ENCODE measurements at regions of chr20 and their contacts with region 1.

Region 1: DNA sequence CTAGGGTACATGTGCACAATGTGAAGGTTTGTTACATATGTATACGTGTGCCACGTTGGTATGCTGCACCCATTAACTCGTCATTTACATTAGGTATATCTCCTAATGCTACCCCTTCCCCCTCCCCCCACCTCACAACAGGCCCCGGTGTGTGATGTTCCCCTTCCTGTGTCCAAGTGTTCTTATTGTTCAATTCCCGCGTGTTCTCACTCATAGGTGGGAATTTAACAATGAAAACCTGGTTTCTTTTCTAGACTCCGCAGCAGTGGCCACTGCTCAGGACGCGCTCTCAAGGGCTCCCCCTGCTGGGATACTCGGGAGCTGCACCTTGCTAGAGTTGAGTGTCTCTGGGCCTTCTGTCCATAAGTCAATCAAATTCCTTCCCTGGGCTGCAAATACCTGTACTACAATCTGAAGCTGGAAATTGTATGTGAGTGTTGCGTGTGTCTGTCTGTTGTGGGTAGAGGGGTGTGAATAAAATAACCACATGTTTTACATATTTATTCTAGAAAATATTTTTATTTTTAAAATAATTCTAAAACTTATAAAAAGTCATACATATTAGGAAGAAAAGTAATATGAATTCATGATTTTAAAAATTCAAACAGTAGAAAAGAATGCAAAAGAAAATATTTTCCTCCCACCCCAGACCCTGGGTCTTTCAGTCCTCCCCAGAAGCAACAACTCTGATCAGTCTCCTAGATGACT is 8.2 kb upstream of the CEP250 start:
- DNase-seq: peak; percentile 90
- H3K4me3 ChIP-seq: peak overlapping the region; percentile 21 to 42 (median 22)
- H3K27ac ChIP-seq: no peak overlapping the region
- H3K4me1 ChIP-seq: peaks cover 3% of the 10 kb centered on the region
- H3K27me3 ChIP-seq: no peaks in the 10 kb centered on the region
- CTCF ChIP-seq: peak; percentile 87 to 94
- POLR2A ChIP-seq: no peak

Region 2: GRCh38 chr20:35344354-35344837 is 102.8 kb before region 1 on chr20:
- CTCF ChIA-PET with region 1: interaction called, 15 read pairs
- POLR2A ChIA-PET with region 1: no interaction called
- dilution Hi-C with region 1: no loop called
- intact Hi-C with region 1: no loop called
- DNase-seq: peak; percentile 88
- H3K4me3 ChIP-seq: no peak overlapping the region
- H3K27ac ChIP-seq: no peak overlapping the region
- H3K4me1 ChIP-seq: peaks cover 10% of the 10 kb centered on the region
- H3K27me3 ChIP-seq: no peaks in the 10 kb centered on the region
- CTCF ChIP-seq: no peak
- POLR2A ChIP-seq: no peak

Region 3: DNA sequence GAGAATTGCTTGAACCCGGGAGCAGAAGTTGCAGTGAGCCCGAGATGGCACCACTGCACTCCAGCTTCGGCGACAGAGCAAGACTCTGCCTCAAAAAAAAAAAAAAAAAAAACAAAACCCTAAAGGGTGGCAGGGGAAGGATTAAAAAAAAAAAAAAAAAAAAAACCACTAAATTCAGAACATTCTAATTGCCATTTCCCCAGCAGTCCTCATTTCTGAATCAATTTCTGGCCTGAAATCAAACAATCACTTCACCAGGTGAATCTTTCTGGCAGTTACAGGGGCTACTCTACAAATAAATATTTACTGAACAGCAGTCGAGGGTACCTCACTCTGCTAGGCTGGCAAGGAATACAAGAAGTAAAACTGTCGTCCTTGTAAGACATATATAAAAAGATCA is 36.6 kb before region 1 on chr20:
- CTCF ChIA-PET with region 1: interaction called, 4 read pairs
- POLR2A ChIA-PET with region 1: no interaction called
- dilution Hi-C with region 1: no loop called
- intact Hi-C with region 1: loop called (anchors 5 kb)
- DNase-seq: no peak
- H3K4me3 ChIP-seq: peak overlapping the region in 1 of 3 experiments; percentile 98
- H3K27ac ChIP-seq: no peak overlapping the region
- H3K4me1 ChIP-seq: peaks cover 8% of the 10 kb centered on the region
- H3K27me3 ChIP-seq: no peaks in the 10 kb centered on the region
- CTCF ChIP-seq: no peak
- POLR2A ChIP-seq: no peak

Region 4: DNA sequence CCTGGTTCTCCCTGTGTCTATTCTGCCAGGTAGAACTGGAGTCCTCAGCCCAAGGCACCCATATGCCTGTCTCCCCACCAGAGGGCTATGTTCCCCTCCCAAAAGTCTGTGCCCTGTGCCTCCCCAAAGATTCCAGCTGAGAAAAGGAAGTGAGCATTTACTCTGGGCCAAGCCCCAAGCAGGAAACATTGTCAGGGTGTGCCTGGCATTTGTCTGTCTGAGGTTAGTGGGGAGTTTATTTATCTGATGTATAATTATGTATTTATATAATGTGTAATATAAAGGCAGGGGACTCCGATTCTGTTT is 14.9 kb before region 1 on chr20:
- CTCF ChIA-PET with region 1: interaction called, 17 read pairs
- POLR2A ChIA-PET with region 1: no interaction called
- dilution Hi-C with region 1: no loop called
- intact Hi-C with region 1: no loop called
- DNase-seq: no peak
- H3K4me3 ChIP-seq: no peak overlapping the region
- H3K27ac ChIP-seq: no peak overlapping the region
- H3K4me1 ChIP-seq: no peaks in the 10 kb centered on the region
- H3K27me3 ChIP-seq: no peaks in the 10 kb centered on the region
- CTCF ChIP-seq: no peak
- POLR2A ChIP-seq: no peak